ENCODE measurements at regions of chr13 and their contacts with region 1.

Region 1: GRCh38 chr13:79405829-79406596 is at the start of gene RBM26:
- DNase-seq: peak; percentile 93 to 95 (median 94)
- H3K4me3 ChIP-seq: peak within 1 kb of the TSS; percentile 57 to 72
- H3K4me3 Mint-ChIP-seq: peak within 1 kb of the TSS in 7 of 8 donors; percentile 95 to 96 (median 95)
- H3K27ac ChIP-seq: peak within 1 kb of the TSS; percentile 97
- H3K27ac Mint-ChIP-seq: peak within 1 kb of the TSS in 6 of 7 donors; percentile 97 to 99 (median 98)
- H3K4me1 ChIP-seq: peaks cover 53% of the 10 kb centered on the region
- H3K4me1 Mint-ChIP-seq: peaks cover 16 to 38% (median 28%) of the 10 kb centered on the region in 4 donors
- H3K27me3 ChIP-seq: no peaks in the 10 kb centered on the region
- H3K27me3 Mint-ChIP-seq: no peaks in the 10 kb centered on the region
- total RNA-seq, gene RBM26: 94.1 to 96.3 TPM

Region 2: GRCh38 chr13:78658635-78659449 is 747.2 kb before region 1 on chr13 and contains the start of gene OBI1:
- CTCF ChIA-PET with region 1: no interaction called
- POLR2A ChIA-PET with region 1: no interaction called
- intact Hi-C with region 1: loop called (anchors 2 kb)
- DNase-seq: peak; percentile 89 to 91 (median 89)
- H3K4me3 ChIP-seq: peak within 1 kb of the TSS; percentile 84 to 94
- H3K4me3 Mint-ChIP-seq: peak within 1 kb of the TSS; percentile 98 to 100 (median 100)
- H3K27ac ChIP-seq: peak within 1 kb of the TSS; percentile 73
- H3K27ac Mint-ChIP-seq: peak within 1 kb of the TSS; percentile 87 to 99 (median 98)
- H3K4me1 ChIP-seq: peaks cover 24% of the 10 kb centered on the region
- H3K4me1 Mint-ChIP-seq: peaks cover 23 to 42% (median 37%) of the 10 kb centered on the region in 4 donors
- H3K27me3 ChIP-seq: no peaks in the 10 kb centered on the region
- H3K27me3 Mint-ChIP-seq: peaks cover 0 to 2% of the 10 kb centered on the region in 2 donors
- total RNA-seq, gene OBI1: 16.3 to 16.7 TPM

Region 3: GRCh38 chr13:79393564-79394249 is 12.3 kb before region 1 on chr13:
- CTCF ChIA-PET with region 1: interaction called, 72 read pairs
- POLR2A ChIA-PET with region 1: interaction called, 31 read pairs
- intact Hi-C with region 1: loop called (anchors 1 kb)
- DNase-seq: peak; percentile 40 to 61 (median 49)
- H3K4me3 ChIP-seq: peak overlapping the region; percentile 25 to 35
- H3K4me3 Mint-ChIP-seq: peak overlapping the region; percentile 75 to 88 (median 82)
- H3K27ac ChIP-seq: peak overlapping the region; percentile 40
- H3K27ac Mint-ChIP-seq: peak overlapping the region; percentile 87 to 93 (median 90)
- H3K4me1 ChIP-seq: peaks cover 62% of the 10 kb centered on the region
- H3K4me1 Mint-ChIP-seq: peaks cover 44 to 64% (median 56%) of the 10 kb centered on the region in 4 donors
- H3K27me3 ChIP-seq: no peaks in the 10 kb centered on the region
- H3K27me3 Mint-ChIP-seq: no peaks in the 10 kb centered on the region

Region 4: DNA sequence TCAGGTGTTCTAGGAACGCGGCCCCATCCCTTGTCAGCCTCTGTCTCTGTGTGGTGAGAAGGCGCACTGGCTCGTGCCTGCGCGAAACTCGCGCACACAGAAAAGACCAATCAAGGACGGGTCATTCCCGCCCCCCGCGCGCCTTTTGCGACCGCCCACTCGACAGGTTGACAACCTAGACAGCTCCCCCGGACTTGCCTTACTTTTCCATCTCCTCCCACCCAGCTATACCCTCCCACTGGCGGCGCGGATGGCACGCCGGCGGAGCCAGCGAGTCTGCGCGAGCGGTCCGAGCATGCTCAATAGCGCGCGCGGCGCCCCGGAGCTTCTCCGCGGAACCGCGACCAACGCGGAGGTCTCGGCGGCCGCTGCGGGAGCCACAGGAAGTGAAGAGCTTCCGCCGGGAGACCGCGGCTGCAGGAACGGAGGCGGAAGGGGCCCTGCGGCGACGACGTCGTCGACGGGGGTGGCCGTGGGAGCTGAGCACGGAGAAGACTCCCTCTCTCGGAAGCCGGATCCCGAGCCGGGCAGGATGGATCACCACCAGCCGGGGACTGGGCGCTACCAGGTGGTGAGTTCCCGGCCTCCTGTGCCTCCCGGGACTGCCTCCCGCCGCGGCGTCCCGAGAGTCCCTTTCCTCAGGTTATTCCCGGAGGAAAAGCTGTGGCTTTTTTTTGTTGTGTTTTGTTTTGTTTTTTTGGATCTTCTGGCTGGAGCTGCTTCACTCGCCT is 75.1 kb after region 1 on chr13 and contains the start of gene NDFIP2:
- CTCF ChIA-PET with region 1: interaction called, 3 read pairs
- POLR2A ChIA-PET with region 1: interaction called, 15 read pairs
- intact Hi-C with region 1: loop called (anchors 1 kb)
- DNase-seq: peak; percentile 78 to 91 (median 81)
- H3K4me3 ChIP-seq: peak within 1 kb of the TSS; percentile 52 to 81
- H3K4me3 Mint-ChIP-seq: peak within 1 kb of the TSS; percentile 88 to 96 (median 94)
- H3K27ac ChIP-seq: peak within 1 kb of the TSS; percentile 48
- H3K27ac Mint-ChIP-seq: peak within 1 kb of the TSS; percentile 80 to 93 (median 92)
- H3K4me1 ChIP-seq: peaks cover 22% of the 10 kb centered on the region
- H3K4me1 Mint-ChIP-seq: peaks cover 25 to 42% (median 36%) of the 10 kb centered on the region in 4 donors
- H3K27me3 ChIP-seq: no peaks in the 10 kb centered on the region
- H3K27me3 Mint-ChIP-seq: no peaks in the 10 kb centered on the region
- total RNA-seq, gene NDFIP2: 2.7 to 3.7 TPM

Region 5: DNA sequence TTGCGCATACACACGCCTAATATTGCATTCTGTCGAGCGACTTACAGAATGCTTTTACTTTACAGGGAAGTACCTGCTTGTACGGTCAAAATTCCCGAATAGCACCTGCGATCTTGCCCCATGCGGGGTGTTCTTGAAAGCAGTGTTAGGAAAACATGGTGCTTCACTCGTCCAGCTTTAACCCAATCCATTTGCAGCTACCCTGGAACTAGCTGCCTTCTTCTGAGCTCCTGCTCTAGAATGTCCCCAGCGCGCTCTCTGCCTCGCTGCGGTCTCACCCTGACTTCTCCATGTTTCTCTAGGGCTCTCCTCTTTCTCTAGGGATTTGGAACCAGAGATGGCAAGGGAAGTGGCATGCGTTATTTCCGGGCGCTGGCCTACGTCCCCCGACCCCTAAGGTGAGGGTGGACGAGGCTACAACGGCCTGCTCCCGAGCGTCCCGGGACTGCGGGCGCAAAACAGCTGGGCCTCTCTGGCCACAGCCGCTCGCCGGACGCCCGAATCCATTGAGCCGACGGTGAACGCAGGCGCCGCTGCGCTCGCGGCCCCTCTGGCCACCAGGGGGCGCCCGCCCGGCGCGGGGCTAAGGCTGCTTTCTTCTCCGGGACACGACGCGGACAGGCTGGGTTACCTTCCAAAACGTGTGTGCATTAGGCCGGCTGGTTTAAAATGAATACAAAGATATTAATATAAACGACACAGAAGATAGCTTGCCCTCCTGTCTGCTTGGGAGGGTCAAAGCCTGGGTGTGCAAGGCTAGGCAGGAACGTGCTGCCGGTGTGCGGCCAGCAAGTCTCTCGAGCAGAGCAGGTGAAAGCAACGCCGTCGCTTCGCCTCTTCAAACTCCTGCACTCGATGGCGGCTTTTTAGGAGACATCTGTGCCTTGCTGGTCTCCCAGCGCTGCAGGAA is 936.7 kb after region 1 on chr13:
- CTCF ChIA-PET with region 1: no interaction called
- POLR2A ChIA-PET with region 1: no interaction called
- intact Hi-C with region 1: loop called (anchors 5 kb)
- DNase-seq: peak in 4 of 5 donors; percentile 51 to 61 (median 55)
- H3K4me3 ChIP-seq: peak overlapping the region in 1 of 2 donors; percentile 6
- H3K4me3 Mint-ChIP-seq: peak overlapping the region; percentile 55 to 85 (median 78)
- H3K27ac ChIP-seq: no peak overlapping the region
- H3K27ac Mint-ChIP-seq: no peak overlapping the region
- H3K4me1 ChIP-seq: peaks cover 38% of the 10 kb centered on the region
- H3K4me1 Mint-ChIP-seq: peaks cover 9 to 28% (median 19%) of the 10 kb centered on the region in 4 donors
- H3K27me3 ChIP-seq: peaks cover 21% of the 10 kb centered on the region
- H3K27me3 Mint-ChIP-seq: peaks cover 20% of the 10 kb centered on the region in 2 donors